Posterior cingulate gyrus (tissue), 11 donors: ENCODE measurements at regions of chr7 and their contacts with region 1.

Region 1: DNA sequence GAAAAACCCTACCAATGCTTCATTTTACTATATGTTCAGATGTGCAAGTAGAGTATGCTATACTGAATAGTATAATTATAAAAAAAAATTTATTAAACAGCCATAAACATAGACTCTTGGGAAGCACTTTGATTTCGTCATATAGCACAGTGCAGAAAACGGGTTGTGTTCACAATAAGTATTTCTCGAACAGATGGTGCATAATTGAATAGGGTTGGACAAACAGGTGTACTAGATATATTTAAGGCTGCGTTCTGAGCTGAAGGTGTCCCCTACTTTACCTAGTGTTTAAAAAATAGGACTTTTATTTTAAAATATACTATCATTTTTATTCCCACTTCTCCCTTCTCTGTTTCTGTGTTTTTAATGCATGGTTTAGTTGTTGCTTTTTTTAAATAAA is 841.5 kb downstream of the ANKRD7 start:
- DNase-seq: no peak

Region 2: DNA sequence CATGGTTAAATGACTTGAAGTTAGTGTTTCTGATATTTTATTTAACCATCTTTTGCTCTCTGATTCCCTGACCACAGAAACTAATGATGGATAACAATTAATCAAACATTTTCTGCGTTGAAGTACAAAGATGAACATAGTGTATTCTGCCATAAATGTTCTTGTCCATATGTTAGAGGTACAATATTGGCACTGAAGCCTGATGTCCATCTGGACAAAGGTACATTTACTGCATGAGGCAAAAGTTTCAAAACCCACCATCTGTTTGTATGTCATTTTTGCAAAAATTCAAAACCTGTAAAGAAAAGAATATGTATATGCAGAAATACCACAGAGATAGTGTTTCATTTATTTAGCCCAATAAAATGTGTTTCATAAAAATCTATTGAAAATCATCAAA is 20.1 kb after region 1 on chr7:
- intact Hi-C with region 1: loop called (anchors 2 kb)
- DNase-seq: no peak

Region 3: DNA sequence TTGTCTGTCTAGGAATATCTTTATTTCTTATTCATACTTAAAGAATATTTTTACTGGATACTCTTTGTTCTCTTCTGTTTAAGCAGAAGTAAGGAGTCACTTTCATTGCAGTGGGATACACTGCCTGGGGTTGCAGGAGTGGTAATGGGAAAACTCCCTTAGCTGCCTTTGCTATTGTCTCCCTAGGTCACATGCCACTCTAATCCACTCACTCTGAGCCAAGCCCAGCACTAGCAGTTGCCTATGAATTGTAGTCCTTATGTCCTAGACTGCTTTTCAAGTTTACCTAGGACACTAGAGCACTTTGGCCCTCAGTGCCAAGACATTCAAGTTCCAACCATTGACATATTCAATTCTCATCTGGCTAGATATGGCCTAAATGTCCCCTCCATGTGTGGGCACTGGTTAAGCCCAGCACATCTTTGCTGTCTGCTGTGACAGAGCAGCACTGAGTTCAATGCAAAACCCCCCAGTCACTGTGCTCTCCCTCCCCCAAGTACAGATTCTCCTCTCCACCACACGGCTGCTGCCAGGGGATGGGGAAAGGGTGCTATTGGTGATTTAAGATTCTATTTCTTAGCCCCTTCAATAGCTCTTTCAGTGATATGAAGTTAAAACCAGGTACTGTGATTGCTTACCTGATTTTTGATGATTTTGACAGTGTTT is 215.3 kb after region 1 on chr7:
- intact Hi-C with region 1: no loop called
- DNase-seq: no peak